CD4-positive, alpha-beta T cell (primary cell): ENCODE measurements at regions of chr6 and their contacts with region 1.

Region 1: GRCh38 chr6:42745707-42746462 is at the start of gene TBCC:
- DNase-seq: peak; percentile 86 to 98 (median 92)
- ATAC-seq: peak; percentile 77
- H3K4me3 ChIP-seq: peak within 1 kb of the TSS; percentile 96
- H3K4me3 Mint-ChIP-seq: peak within 1 kb of the TSS; percentile 100
- H3K27ac ChIP-seq: peak within 1 kb of the TSS; percentile 89 to 94
- H3K27ac Mint-ChIP-seq: peak within 1 kb of the TSS; percentile 96
- H3K4me1 ChIP-seq: peaks cover 43% of the 10 kb centered on the region
- H3K4me1 Mint-ChIP-seq: peaks cover 35% of the 10 kb centered on the region
- H3K27me3 ChIP-seq: no peaks in the 10 kb centered on the region
- H3K27me3 Mint-ChIP-seq: no peaks in the 10 kb centered on the region
- CTCF ChIP-seq: no peak
- total RNA-seq, gene TBCC: 67.3 to 68.3 TPM

Region 2: DNA sequence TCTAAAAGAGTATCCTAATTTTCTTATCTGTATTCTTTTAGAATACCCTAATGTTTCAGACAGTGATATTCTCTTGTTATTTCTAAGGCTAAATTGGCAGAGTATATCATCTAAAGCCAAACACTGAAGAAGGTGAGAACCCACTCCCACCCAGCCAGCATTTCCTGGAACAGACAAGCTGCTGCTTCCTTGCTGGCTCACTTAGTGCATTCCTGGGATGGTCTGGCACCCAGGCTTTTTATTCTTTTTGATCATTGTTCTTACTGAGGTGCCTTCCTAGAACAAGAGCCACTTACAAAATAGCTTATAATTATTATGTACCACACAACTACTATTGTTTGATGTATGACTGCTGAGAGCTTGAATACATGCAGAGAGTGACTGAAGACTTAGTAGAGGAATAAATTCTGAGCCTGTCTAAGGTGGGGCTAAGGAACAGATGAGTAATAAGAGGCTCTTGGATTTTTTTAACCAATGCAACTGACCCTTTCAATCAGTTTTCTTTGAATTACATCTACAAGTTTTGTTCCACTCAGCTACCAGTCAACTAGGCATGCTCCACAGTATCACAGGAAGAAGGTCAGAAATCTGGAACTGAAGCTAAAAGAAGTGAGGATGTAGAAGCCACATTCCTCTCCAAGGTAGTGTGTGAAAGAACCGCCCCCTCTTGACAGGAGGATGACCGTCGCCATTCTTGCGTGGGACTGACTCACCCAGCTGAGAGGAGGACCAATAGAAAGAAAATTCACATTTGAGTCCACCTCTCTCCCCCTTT is 53.6 kb before region 1 on chr6:
- CTCF ChIA-PET with region 1: no interaction called
- POLR2A ChIA-PET with region 1: interaction called, 23 read pairs
- intact Hi-C with region 1: no loop called
- DNase-seq: no peak
- ATAC-seq: no peak
- H3K4me3 ChIP-seq: no peak overlapping the region
- H3K4me3 Mint-ChIP-seq: no peak overlapping the region
- H3K27ac ChIP-seq: peak overlapping the region in 1 of 2 donors; percentile 5
- H3K27ac Mint-ChIP-seq: peak overlapping the region; percentile 84
- H3K4me1 ChIP-seq: peaks cover 11% of the 10 kb centered on the region
- H3K4me1 Mint-ChIP-seq: peaks cover 39% of the 10 kb centered on the region
- H3K27me3 ChIP-seq: no peaks in the 10 kb centered on the region
- H3K27me3 Mint-ChIP-seq: no peaks in the 10 kb centered on the region
- CTCF ChIP-seq: no peak

Region 3: DNA sequence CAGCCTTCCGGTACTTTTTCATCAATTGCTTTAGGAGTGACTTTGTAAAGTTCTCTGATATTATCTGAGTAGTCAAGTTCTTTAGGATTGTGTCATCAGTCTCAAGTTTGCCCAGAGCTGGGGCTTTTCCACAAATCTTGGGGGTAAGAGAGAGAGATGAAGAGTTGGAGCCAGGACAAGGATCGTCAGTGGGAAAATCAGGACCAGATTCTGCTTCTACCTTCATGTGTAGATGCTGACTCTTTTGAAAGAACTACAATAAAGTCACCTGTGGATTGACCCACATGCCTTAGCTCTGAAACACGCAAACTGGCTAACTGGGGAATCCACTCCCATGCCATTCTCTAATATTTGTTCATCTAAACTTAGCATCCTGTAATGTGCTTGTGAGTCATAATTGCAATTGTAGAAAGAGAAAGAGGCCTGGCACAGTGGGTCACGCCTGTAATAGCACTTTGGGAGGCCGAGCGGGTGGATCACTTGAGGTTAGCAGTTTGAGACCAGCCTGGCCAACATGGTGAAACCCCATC is 20.3 kb after region 1 on chr6:
- CTCF ChIA-PET with region 1: interaction called, 23 read pairs
- POLR2A ChIA-PET with region 1: interaction called, 1,427 read pairs
- intact Hi-C with region 1: loop called (anchors 1 kb)
- DNase-seq: peak in 1 of 14 experiments; percentile 32
- ATAC-seq: no peak
- H3K4me3 ChIP-seq: no peak overlapping the region
- H3K4me3 Mint-ChIP-seq: no peak overlapping the region
- H3K27ac ChIP-seq: no peak overlapping the region
- H3K27ac Mint-ChIP-seq: peak overlapping the region; percentile 58
- H3K4me1 ChIP-seq: peaks cover 32% of the 10 kb centered on the region
- H3K4me1 Mint-ChIP-seq: peaks cover 58% of the 10 kb centered on the region
- H3K27me3 ChIP-seq: no peaks in the 10 kb centered on the region
- H3K27me3 Mint-ChIP-seq: no peaks in the 10 kb centered on the region
- CTCF ChIP-seq: no peak

Region 4: GRCh38 chr6:42790549-42791181 is 44.8 kb after region 1 on chr6:
- CTCF ChIA-PET with region 1: interaction called, 6 read pairs
- POLR2A ChIA-PET with region 1: interaction called, 1,427 read pairs
- intact Hi-C with region 1: no loop called
- DNase-seq: peak in 1 of 14 experiments; percentile 32
- ATAC-seq: no peak
- H3K4me3 ChIP-seq: no peak overlapping the region
- H3K4me3 Mint-ChIP-seq: no peak overlapping the region
- H3K27ac ChIP-seq: peak overlapping the region in 1 of 2 donors; percentile 11
- H3K27ac Mint-ChIP-seq: no peak overlapping the region
- H3K4me1 ChIP-seq: peaks cover 47% of the 10 kb centered on the region
- H3K4me1 Mint-ChIP-seq: peaks cover 28% of the 10 kb centered on the region
- H3K27me3 ChIP-seq: no peaks in the 10 kb centered on the region
- H3K27me3 Mint-ChIP-seq: no peaks in the 10 kb centered on the region
- CTCF ChIP-seq: no peak

Region 5: DNA sequence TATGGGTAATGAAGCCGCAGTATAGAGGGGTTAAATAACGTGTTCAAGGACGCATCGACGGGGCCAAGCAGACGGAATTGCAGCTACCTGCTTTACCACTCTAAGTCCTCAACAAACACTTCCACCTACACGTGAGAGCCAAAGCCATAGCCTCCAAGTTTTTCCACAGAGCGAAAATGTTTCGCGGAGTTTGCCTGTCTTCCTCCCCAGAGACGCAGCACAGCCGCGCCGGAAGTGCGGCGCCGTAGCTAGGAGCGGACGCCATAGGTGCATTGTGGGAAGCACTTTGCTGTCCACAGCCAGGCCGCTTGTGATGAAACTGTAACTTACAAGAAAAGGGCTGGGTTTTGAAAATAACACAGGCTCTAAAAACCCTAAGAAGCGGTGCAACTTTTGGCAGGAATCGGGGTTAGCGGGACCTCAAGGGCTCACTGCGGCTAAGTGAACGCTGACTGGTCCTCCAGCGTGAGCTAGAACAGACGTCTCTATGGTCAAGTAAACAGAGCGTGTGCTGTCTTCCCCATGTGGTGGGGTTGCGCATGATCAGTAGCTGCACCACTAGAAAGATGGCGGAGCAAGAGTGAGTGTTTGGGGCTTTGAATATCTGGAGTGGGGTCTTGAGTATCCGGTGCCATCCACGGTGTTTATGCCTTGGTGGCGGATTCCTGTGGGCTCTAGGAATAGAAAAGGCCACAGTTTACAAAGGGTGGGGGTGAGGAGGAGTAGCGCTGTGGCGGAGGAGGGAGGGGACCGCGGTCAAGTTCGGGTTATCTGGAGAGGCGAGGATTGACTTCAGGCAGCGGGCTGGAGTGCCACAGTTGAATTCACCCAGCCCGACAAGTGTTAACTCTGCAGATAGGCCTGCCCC is 133.7 kb after region 1 on chr6 and contains the start of gene RPL7L1:
- CTCF ChIA-PET with region 1: interaction called, 6 read pairs
- POLR2A ChIA-PET with region 1: interaction called, 111 read pairs
- intact Hi-C with region 1: loop called (anchors 1 kb)
- DNase-seq: peak; percentile 68 to 93 (median 79)
- ATAC-seq: peak; percentile 92
- H3K4me3 ChIP-seq: peak within 1 kb of the TSS; percentile 69
- H3K4me3 Mint-ChIP-seq: peak within 1 kb of the TSS; percentile 93
- H3K27ac ChIP-seq: peak within 1 kb of the TSS; percentile 94 to 95
- H3K27ac Mint-ChIP-seq: peak within 1 kb of the TSS; percentile 97
- H3K4me1 ChIP-seq: peaks cover 41% of the 10 kb centered on the region
- H3K4me1 Mint-ChIP-seq: peaks cover 23% of the 10 kb centered on the region
- H3K27me3 ChIP-seq: no peaks in the 10 kb centered on the region
- H3K27me3 Mint-ChIP-seq: no peaks in the 10 kb centered on the region
- CTCF ChIP-seq: no peak
- total RNA-seq, gene RPL7L1: 76.1 TPM

Region 6: DNA sequence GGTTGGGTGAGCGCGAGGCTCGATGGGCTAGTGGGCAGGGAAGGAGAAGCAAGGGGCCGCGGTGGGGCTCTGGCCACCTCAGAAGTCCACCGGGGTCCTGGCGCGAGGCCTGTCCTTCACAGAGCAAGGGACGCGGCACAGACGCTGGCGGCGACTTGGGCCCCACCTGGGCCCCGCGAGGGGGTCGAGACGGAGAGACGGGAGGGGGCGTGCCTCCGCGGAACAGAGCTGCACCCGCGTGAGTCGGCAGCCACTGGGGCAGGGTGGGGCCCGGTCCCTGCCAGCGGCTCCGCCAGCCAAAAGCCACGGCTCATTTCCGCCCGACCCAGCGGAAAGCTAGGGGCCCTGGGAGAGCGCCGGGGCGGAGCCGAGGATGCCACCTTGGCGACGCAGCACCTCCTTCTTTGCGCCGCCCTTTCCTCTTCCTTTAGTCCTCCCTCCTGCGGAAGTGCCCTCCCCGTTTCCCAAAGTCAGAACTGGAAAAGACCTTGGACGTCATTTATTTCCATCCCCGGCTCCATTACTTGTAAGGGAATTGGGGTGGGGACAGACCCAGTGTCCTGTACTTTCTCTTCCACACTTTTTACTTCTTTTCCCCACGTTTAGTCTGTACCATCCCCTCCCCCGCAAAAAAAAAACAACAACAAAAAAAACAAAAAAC is 307.8 kb after region 1 on chr6 and contains the start of gene CUL7:
- CTCF ChIA-PET with region 1: no interaction called
- POLR2A ChIA-PET with region 1: interaction called, 11 read pairs
- intact Hi-C with region 1: no loop called
- DNase-seq: peak; percentile 78 to 95 (median 89)
- ATAC-seq: peak; percentile 99
- H3K4me3 ChIP-seq: peak within 1 kb of the TSS; percentile 93
- H3K4me3 Mint-ChIP-seq: peak within 1 kb of the TSS; percentile 98
- H3K27ac ChIP-seq: peak within 1 kb of the TSS; percentile 76 to 84
- H3K27ac Mint-ChIP-seq: peak within 1 kb of the TSS; percentile 96
- H3K4me1 ChIP-seq: peaks cover 45% of the 10 kb centered on the region
- H3K4me1 Mint-ChIP-seq: peaks cover 59% of the 10 kb centered on the region
- H3K27me3 ChIP-seq: no peaks in the 10 kb centered on the region
- H3K27me3 Mint-ChIP-seq: no peaks in the 10 kb centered on the region
- CTCF ChIP-seq: no peak
- total RNA-seq, gene CUL7: 5.9 to 6.9 TPM

Region 7: DNA sequence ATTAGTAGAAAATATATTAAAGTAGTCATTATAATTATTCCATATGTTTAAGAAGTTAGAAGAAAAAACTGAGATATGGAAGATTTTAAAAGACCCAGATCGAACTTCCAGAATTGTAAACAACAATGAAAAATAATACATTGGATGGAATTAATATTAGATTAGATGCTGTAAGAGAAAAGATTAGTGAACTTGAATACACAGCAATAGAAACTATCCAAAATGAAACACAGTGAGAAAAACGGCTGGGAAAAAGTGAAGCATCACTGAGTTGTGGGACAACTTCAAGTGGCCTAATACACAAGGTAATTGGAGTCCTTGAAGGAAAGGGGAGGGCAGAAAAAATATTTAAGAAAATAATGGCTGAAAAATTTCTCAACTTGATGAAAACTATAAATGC is 493.2 kb after region 1 on chr6:
- CTCF ChIA-PET with region 1: no interaction called
- POLR2A ChIA-PET with region 1: no interaction called
- intact Hi-C with region 1: no loop called
- DNase-seq: no peak
- ATAC-seq: no peak
- H3K4me3 ChIP-seq: no peak overlapping the region
- H3K4me3 Mint-ChIP-seq: no peak overlapping the region
- H3K27ac ChIP-seq: no peak overlapping the region
- H3K27ac Mint-ChIP-seq: no peak overlapping the region
- H3K4me1 ChIP-seq: no peaks in the 10 kb centered on the region
- H3K4me1 Mint-ChIP-seq: no peaks in the 10 kb centered on the region
- H3K27me3 ChIP-seq: peaks cover 18 to 25% of the 10 kb centered on the region in 2 experiments
- H3K27me3 Mint-ChIP-seq: peaks cover 29% of the 10 kb centered on the region
- CTCF ChIP-seq: no peak

Region 8: GRCh38 chr6:44446628-44447306 is 1700.9 kb after region 1 on chr6:
- CTCF ChIA-PET with region 1: no interaction called
- POLR2A ChIA-PET with region 1: no interaction called
- intact Hi-C with region 1: no loop called
- DNase-seq: no peak
- ATAC-seq: no peak
- H3K4me3 ChIP-seq: no peak overlapping the region
- H3K4me3 Mint-ChIP-seq: no peak overlapping the region
- H3K27ac ChIP-seq: no peak overlapping the region
- H3K27ac Mint-ChIP-seq: no peak overlapping the region
- H3K4me1 ChIP-seq: no peaks in the 10 kb centered on the region
- H3K4me1 Mint-ChIP-seq: no peaks in the 10 kb centered on the region
- H3K27me3 ChIP-seq: no peaks in the 10 kb centered on the region
- H3K27me3 Mint-ChIP-seq: no peaks in the 10 kb centered on the region
- CTCF ChIP-seq: no peak